ENCODE measurements at regions of chr22 and their contacts with region 1.

Region 1: GRCh38 chr22:21867528-21868266 is at the start of gene MAPK1:
- DNase-seq: peak; percentile 98
- H3K4me3 ChIP-seq: peak within 1 kb of the TSS; percentile 73 to 92 (median 86)
- H3K27ac ChIP-seq: peak within 1 kb of the TSS; percentile 87 to 97 (median 92)
- H3K4me1 ChIP-seq: peaks cover 19 to 57% (median 50%) of the 10 kb centered on the region in 6 donors
- H3K27me3 ChIP-seq: no peaks in the 10 kb centered on the region
- CTCF ChIP-seq: peak in 9 of 11 experiments; percentile 22 to 75 (median 58)
- POLR2A ChIP-seq: peak in 2 of 3 donors; percentile 13 to 36
- total RNA-seq, gene MAPK1: 87.0 to 165 (median 131) TPM

Region 2: DNA sequence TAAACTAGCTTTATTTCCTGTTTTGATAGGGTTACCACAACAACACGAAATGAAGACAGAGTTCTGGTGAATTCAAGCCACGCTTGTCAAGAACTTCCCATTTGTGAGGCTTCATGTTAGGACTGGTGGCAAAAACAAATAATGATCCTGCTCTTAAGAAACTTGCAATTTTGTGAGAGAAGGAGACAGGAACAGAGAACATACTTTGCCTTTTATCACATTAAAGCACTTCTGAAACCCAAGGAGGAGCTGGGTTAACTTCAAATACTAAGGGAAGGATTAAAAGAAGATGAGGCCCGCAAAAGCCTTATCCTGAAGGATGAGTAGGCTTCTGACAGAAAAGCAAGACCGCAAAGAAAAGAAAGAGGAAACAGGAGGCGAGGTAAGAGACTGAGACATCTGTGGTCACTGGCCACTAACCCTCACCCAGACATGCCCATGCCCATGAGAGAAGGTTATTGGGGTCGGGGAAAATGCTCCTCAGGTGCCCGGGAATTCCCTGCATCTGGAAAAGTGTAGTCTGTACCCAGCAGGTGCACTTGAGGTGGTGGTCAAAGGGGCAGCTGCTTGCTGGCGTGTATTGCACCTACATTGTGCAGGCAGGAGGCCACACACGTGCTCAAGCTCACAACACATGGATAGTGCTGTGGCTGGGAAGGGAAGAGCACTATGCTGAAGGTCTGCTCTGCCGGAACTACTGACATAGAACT is 50.8 kb before region 1 on chr22:
- intact Hi-C with region 1: loop called (anchors 10 kb)
- DNase-seq: no peak
- H3K4me3 ChIP-seq: peak overlapping the region in 4 of 8 donors; percentile 8 to 58 (median 10)
- H3K27ac ChIP-seq: peak overlapping the region; percentile 22 to 92 (median 86)
- H3K4me1 ChIP-seq: peaks cover 35 to 95% (median 67%) of the 10 kb centered on the region in 6 donors
- H3K27me3 ChIP-seq: no peaks in the 10 kb centered on the region
- CTCF ChIP-seq: peak in 1 of 11 experiments; percentile 19
- POLR2A ChIP-seq: no peak

Region 3: DNA sequence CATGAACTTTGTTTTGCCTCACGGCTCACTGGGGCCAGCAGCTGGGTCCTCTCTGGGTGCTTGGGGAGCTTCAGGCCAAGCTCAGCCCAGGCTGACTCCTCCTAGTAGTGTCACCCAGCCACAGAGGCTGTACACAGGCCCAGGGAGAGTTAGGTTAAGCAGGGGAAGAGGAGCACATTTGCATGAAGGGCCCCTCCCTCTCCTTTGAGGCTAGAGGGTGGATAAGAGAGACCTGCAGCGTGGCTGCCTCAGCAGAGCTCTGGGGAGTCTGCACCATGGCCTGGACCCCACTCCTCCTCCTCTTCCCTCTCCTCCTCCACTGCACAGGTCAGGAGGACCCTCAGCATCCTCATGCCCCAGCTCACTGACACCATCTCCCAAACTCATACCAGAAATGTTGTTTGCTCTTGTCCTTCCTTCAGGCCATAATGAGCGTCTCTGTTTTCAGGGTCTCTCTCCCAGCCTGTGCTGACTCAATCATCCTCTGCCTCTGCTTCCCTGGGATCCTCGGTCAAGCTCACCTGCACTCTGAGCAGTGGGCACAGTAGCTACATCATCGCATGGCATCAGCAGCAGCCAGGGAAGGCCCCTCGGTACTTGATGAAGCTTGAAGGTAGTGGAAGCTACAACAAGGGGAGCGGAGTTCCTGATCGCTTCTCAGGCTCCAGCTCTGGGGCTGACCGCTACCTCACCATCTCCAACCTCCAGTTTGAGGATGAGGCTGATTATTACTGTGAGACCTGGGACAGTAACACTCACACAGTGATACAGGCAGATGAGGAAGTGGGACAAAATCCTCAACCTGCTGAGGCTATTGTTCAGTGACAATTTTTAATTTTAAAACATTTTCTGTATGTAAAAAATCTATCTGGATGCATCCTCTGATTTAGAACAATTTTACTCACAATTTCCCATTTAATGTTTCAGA is 294.5 kb after region 1 on chr22:
- intact Hi-C with region 1: no loop called
- DNase-seq: peak; percentile 90
- H3K4me3 ChIP-seq: peak overlapping the region in 1 of 8 donors; percentile 40
- H3K27ac ChIP-seq: peak overlapping the region in 7 of 8 donors; percentile 9 to 94 (median 69)
- H3K4me1 ChIP-seq: peaks cover 3 to 77% (median 33%) of the 10 kb centered on the region in 6 donors
- H3K27me3 ChIP-seq: no peaks in the 10 kb centered on the region
- CTCF ChIP-seq: no peak
- POLR2A ChIP-seq: peak in 1 of 3 donors; percentile 47